ENCODE measurements at regions of chr2 and their contacts with region 1.

Region 1: DNA sequence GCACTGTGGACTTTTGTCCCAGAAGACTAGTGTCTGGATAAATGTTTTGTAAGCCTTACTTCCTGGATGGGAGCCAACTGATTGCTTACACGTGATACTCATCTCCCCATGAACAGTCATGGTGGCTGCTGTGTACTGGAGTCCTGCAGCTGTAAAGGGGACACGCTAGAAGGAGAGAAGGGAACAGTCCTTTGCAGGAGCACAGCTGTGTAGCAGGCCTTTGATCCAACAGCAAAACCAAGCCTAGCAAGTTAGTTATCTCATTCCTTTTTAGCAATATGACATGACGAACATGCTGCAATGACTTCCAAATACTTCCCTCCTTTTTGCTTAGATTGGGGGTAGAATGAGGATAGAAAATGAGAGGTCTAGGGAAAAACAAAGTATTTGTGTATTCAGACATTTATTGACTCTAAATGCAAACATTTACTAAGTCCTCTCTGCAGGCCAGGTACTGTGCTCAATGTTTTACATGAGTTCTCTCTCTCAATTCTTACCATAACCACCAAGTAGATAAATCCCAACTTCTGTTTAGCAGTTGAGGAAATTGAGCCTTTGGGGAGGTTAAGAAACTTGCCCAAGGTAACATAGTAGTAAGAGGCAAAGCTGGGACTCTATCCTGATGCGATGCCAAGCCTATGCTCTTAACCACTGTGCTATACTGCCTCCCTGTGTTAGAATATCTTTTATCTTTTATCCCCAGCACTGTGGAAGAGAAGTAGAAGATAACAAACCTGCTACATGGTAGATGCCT is 55.4 kb upstream of the CD28 start:
- DNase-seq: no peak
- H3K4me3 Mint-ChIP-seq: no peak overlapping the region
- H3K27ac Mint-ChIP-seq: no peak overlapping the region
- H3K4me1 Mint-ChIP-seq: peaks cover 13% of the 10 kb centered on the region
- H3K27me3 Mint-ChIP-seq: no peaks in the 10 kb centered on the region

Region 2: GRCh38 chr2:203484266-203485112 is 166.5 kb before region 1 on chr2:
- CTCF ChIA-PET with region 1: interaction called, 11 read pairs
- POLR2A ChIA-PET with region 1: no interaction called
- intact Hi-C with region 1: loop called (anchors 1 kb)
- DNase-seq: peak; percentile 59
- H3K4me3 Mint-ChIP-seq: no peak overlapping the region
- H3K27ac Mint-ChIP-seq: peak overlapping the region; percentile 1
- H3K4me1 Mint-ChIP-seq: peaks cover 10% of the 10 kb centered on the region
- H3K27me3 Mint-ChIP-seq: no peaks in the 10 kb centered on the region

Region 3: DNA sequence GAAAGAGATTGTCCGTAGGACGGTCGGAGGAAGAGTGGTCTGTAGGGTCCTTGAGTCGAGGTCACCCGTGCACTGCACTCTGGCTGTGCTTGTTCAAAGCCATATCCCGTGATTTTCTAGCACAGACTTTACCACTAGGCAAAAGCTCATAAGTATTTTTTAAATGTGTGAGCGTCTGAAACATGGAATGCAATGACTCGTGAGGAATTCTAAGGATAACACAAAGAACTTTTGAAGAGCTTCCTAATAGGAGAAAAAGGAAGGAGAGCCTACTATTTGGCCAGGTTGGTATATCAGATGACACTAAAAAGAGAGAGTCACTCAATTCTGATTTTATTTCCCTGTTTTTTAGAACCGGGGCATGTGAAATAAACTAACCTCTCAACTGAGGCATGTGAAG is 123.7 kb after region 1 on chr2:
- CTCF ChIA-PET with region 1: no interaction called
- POLR2A ChIA-PET with region 1: no interaction called
- intact Hi-C with region 1: no loop called
- DNase-seq: no peak
- H3K4me3 Mint-ChIP-seq: no peak overlapping the region
- H3K27ac Mint-ChIP-seq: no peak overlapping the region
- H3K4me1 Mint-ChIP-seq: peaks cover 27% of the 10 kb centered on the region
- H3K27me3 Mint-ChIP-seq: no peaks in the 10 kb centered on the region

Measured in activated CD4-positive, alpha-beta memory T cell treated with anti-CD3 and anti-CD28 coated beads for 36 hours (primary cell).